ENCODE measurements at regions of chr1 and their contacts with region 1.

Region 1: GRCh38 chr1:100530880-100531487 is 7.0 kb upstream of the GPR88 start:
- DNase-seq: peak; percentile 44
- ATAC-seq: peak; percentile 95
- H3K4me3 Mint-ChIP-seq: no peak overlapping the region
- H3K27ac Mint-ChIP-seq: peak overlapping the region; percentile 29
- H3K4me1 Mint-ChIP-seq: peaks cover 24% of the 10 kb centered on the region
- H3K27me3 Mint-ChIP-seq: peaks cover 9% of the 10 kb centered on the region

Region 2: DNA sequence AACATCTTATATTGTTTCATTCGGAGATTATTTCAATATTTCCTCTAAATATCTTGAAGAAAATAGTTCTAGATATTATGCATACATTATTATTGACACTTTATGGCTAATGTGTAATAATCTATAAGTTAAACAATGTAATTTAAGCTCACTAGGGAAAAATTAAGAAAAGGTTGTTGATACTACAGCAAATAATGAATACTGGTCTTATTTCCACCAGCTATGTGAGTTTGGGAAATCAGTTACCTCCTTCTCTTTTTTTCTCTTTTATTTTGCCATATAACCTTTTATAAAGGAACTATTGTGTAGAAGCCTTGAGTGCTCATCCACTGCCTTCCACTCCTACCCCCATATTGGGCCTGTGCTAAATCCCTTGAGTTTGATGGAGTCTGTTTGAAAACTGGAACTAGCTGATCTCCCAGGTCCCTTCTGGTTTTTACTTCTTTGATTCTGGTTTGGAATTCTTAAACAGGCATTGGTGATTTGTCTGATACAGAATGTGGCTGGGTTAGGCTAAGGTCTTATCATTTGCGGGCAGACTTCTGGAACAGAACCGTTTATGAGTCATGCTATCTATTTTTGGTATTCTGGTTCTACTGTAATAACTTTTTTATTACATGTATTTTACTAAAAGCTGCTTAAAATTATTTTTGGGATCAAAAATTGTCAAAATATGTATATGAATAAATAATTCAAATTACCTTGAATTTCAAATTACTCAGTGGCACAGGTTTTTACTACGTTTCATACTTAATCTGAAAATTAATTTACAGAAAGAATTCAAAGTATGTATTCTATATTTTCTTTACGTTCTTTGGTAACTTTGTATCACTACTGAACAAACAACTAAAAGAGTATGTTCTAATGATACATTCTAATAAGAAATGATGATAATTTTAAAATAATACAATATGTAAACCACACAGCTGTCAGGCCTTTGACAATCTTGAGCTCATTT is 183.7 kb before region 1 on chr1:
- CTCF ChIA-PET with region 1: no interaction called
- POLR2A ChIA-PET with region 1: no interaction called
- intact Hi-C with region 1: no loop called
- DNase-seq: no peak
- ATAC-seq: no peak
- H3K4me3 Mint-ChIP-seq: no peak overlapping the region
- H3K27ac Mint-ChIP-seq: no peak overlapping the region
- H3K4me1 Mint-ChIP-seq: no peaks in the 10 kb centered on the region
- H3K27me3 Mint-ChIP-seq: no peaks in the 10 kb centered on the region

Region 3: DNA sequence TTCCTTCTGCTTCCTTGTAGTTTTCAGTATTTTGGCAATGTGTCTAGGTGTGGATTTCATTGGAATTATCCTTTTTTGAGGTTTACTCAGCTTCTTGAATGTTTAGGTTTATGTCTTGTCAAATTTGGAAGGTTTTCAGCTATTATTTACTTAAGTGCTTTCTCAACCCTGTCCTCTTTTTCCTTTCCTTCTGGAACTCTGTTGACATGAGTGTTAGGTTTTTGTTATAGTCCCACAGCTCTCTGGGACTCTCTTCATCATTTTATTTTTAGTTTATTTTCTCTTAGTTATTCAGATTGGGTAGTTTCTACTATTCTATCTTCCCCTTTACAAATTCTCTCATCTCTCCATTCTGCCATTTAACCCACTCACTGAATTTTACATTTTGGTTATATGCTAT is 56.1 kb before region 1 on chr1:
- CTCF ChIA-PET with region 1: no interaction called
- POLR2A ChIA-PET with region 1: no interaction called
- intact Hi-C with region 1: loop called in 1 of 2 experiments (anchors 5 kb)
- DNase-seq: no peak
- ATAC-seq: no peak
- H3K4me3 Mint-ChIP-seq: no peak overlapping the region
- H3K27ac Mint-ChIP-seq: no peak overlapping the region
- H3K4me1 Mint-ChIP-seq: peaks cover 11% of the 10 kb centered on the region
- H3K27me3 Mint-ChIP-seq: no peaks in the 10 kb centered on the region

Region 4: DNA sequence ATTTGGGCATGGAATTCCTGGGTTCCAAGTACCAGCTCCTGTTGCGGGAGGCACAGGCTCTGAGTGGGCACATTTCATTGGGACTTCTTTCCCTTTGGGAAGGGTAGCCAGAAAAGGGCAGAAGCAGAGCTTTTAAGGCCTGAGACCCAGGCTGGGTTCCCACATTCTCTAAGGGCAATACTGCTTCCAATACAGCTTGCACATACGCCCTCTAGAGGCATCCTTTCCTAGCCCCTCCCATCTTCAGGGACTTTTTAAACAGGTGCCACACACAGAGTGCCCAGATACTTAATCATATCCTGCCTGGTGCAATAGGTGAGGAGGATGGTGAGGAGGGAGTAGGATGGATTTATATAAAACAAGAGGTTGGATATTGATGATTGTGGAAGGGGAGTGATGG is 12.7 kb after region 1 on chr1:
- CTCF ChIA-PET with region 1: interaction called, 8 read pairs
- POLR2A ChIA-PET with region 1: no interaction called
- intact Hi-C with region 1: loop called in 1 of 2 experiments (anchors 2 kb)
- DNase-seq: peak; percentile 67
- ATAC-seq: peak; percentile 87
- H3K4me3 Mint-ChIP-seq: no peak overlapping the region
- H3K27ac Mint-ChIP-seq: no peak overlapping the region
- H3K4me1 Mint-ChIP-seq: peaks cover 6% of the 10 kb centered on the region
- H3K27me3 Mint-ChIP-seq: peaks cover 25% of the 10 kb centered on the region

Measured in activated CD4-positive, alpha-beta T cell treated with anti-CD3 and anti-CD28 coated beads for 36 hours (primary cell).